ENCODE measurements at regions of chr16 and their contacts with region 1.

Region 1: DNA sequence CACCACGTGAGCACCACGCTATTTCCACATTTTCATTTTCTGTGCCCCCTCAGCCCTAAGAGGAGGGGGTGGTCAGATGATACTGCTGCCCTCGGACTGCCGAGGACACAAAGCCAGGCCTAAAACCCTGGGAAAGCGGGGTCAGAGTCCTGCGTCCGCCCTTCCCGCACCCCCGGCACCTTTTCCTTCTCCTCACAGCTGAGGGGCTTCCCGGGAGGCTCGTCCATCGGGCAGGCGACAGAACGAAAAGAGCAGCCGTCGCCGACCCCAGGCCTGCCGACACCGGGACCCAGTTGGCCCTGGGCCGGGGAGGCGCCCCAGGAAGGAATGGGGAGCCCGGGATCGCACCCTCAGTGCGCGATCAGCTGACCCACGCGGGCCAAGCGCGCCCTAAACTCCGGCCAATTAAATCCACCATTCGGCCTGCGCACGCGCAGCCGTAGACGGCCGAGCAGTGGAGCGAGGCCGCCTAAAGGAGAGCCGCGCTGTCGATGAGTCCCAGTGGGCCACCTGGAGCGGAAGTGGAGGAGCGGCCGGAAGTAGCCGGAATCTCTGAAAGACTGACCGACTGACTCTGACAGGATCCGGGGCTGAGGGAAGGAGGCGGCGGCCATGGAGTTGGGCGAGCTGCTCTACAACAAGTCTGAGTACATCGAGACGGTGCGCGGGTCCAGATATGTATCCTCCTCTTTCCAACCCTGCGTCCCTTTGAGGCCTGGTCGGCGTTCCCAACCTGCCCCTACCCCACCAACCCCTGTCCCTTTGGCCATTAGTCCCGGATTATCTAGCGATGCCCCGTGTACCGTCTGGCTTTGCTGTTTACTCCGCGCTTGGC is at the starts of genes DCTN5 and PALB2:
- DNase-seq: peak; percentile 98
- ATAC-seq: peak; percentile 98
- H3K4me3 ChIP-seq: peak within 1 kb of the TSS; percentile 91 to 97 (median 97)
- H3K27ac ChIP-seq: peak within 1 kb of the TSS; percentile 89
- H3K4me1 ChIP-seq: peaks cover 34% of the 10 kb centered on the region
- H3K27me3 ChIP-seq: no peaks in the 10 kb centered on the region; a peak in 1 of 5 replicates
- CTCF ChIP-seq: peak; percentile 31
- EP300 ChIP-seq: peak in 1 of 2 experiments; percentile 63; a peak in 3 of 4 replicates
- POLR2A ChIP-seq: peak; percentile 88 to 93
- RAD21 ChIP-seq: peak; percentile 62
- total RNA-seq, gene DCTN5: 207 and 352 TPM in 2 replicates
- total RNA-seq, gene PALB2: 40.9 and 58.5 TPM in 2 replicates

Region 2: DNA sequence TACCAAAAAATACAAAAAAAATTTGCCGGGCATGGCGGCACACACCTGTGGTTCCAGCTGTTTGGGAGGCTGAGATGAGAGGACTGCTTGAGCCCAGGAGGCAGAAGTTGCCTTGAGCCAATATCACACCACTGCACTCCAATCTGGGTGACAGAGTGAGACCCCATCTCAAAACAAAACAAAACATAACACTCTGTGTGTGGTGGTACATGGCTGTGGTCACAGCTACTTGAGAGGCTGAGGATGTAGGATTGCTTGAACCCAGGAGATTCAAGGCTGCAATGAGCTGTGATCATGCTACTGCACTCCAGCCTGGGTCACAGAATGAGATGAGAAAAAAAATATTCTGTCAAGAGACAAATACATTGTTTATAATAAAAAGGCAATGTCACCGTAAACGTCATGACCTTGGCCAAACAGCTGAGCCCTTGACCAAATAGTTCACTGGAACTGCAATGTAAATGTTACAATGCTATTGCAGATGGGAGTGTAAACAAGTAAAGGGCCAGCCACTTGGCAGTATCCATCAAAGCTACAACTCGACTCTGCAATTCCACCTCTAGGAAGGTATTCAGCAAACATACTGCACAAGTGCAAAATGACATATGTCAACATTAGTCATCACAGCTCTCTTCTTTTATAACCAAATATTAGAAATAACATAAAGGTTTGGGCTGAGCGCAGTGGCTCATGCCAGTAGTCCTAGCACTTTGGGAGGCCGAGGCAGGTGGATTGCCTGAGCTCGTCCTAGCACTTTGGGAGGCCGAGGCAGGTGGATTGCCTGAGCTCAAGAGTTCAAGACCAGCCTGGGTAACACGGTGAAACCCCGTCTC is 100.9 kb before region 1 on chr16:
- CTCF ChIA-PET with region 1: no interaction called
- POLR2A ChIA-PET with region 1: interaction called, 10 read pairs
- in situ Hi-C with region 1: no loop called
- intact Hi-C with region 1: no loop called
- DNase-seq: peak; percentile 99
- ATAC-seq: peak; percentile 95
- H3K4me3 ChIP-seq: no peak overlapping the region
- H3K27ac ChIP-seq: peak overlapping the region; percentile 91
- H3K4me1 ChIP-seq: peaks cover 47% of the 10 kb centered on the region
- H3K27me3 ChIP-seq: no peaks in the 10 kb centered on the region
- CTCF ChIP-seq: peak; percentile 25
- EP300 ChIP-seq: peak; percentile 88 to 96
- POLR2A ChIP-seq: peak in 1 of 2 experiments; percentile 17; a peak in 1 of 4 replicates
- RAD21 ChIP-seq: no peak

Region 3: GRCh38 chr16:23595951-23596720 is 45.0 kb before region 1 on chr16 and contains the start of gene NDUFAB1:
- CTCF ChIA-PET with region 1: no interaction called
- POLR2A ChIA-PET with region 1: interaction called, 9 read pairs
- in situ Hi-C with region 1: no loop called
- intact Hi-C with region 1: loop called (anchors 2 kb)
- DNase-seq: peak; percentile 91
- ATAC-seq: peak; percentile 96
- H3K4me3 ChIP-seq: peak within 1 kb of the TSS; percentile 72 to 98 (median 97)
- H3K27ac ChIP-seq: peak within 1 kb of the TSS; percentile 80
- H3K4me1 ChIP-seq: peaks cover 31% of the 10 kb centered on the region
- H3K27me3 ChIP-seq: peaks cover 0 to 5% of the 10 kb centered on the region in 2 experiments; a peak in 1 of 5 replicates
- CTCF ChIP-seq: peak; percentile 96
- EP300 ChIP-seq: peak in 1 of 2 experiments; percentile 58; a peak in 1 of 4 replicates
- POLR2A ChIP-seq: peak; percentile 93 to 97
- RAD21 ChIP-seq: peak; percentile 87
- total RNA-seq, gene NDUFAB1: 601 and 760 TPM in 2 replicates

Region 4: GRCh38 chr16:23678430-23679273 is 37.5 kb after region 1 on chr16 and contains the start of gene PLK1:
- CTCF ChIA-PET with region 1: no interaction called
- POLR2A ChIA-PET with region 1: interaction called, 20 read pairs
- in situ Hi-C with region 1: no loop called
- intact Hi-C with region 1: loop called (anchors 2 kb)
- DNase-seq: peak; percentile 90
- ATAC-seq: peak; percentile 89
- H3K4me3 ChIP-seq: peak within 1 kb of the TSS; percentile 94 to 97 (median 95)
- H3K27ac ChIP-seq: peak within 1 kb of the TSS; percentile 75
- H3K4me1 ChIP-seq: peaks cover 67% of the 10 kb centered on the region
- H3K27me3 ChIP-seq: no peaks in the 10 kb centered on the region; a peak in 1 of 5 replicates
- CTCF ChIP-seq: peak; percentile 57
- EP300 ChIP-seq: peak; percentile 23 to 49; a peak in 1 of 4 replicates
- POLR2A ChIP-seq: peak; percentile 91 to 93
- RAD21 ChIP-seq: no peak; the same call in none of the 2 replicates
- total RNA-seq, gene PLK1: 76.3 and 97.4 TPM in 2 replicates

Region 5: GRCh38 chr16:23729503-23730424 is 88.6 kb after region 1 on chr16:
- CTCF ChIA-PET with region 1: no interaction called
- POLR2A ChIA-PET with region 1: no interaction called
- in situ Hi-C with region 1: no loop called
- intact Hi-C with region 1: loop called (anchors 5 kb)
- DNase-seq: peak; percentile 51
- ATAC-seq: peak; percentile 84
- H3K4me3 ChIP-seq: 0 out of 6 replicates have a peak overlapping the region, but pooled peaks of 1 of the 3 experiments have one; percentile 3
- H3K27ac ChIP-seq: no peak overlapping the region
- H3K4me1 ChIP-seq: peaks cover 33% of the 10 kb centered on the region
- H3K27me3 ChIP-seq: no peaks in the 10 kb centered on the region
- CTCF ChIP-seq: no peak
- EP300 ChIP-seq: no peak
- POLR2A ChIP-seq: peak in 1 of 2 experiments; percentile 34; a peak in 1 of 4 replicates
- RAD21 ChIP-seq: no peak